Activated CD4-positive, alpha-beta memory T cell treated with anti-CD3 and anti-CD28 coated beads, Interleukin-2, amount 10 ng/mL, durations not matched to agents 7 days and 5 days (primary cell): ENCODE measurements at regions of chr6 and their contacts with region 1.

Region 1: GRCh38 chr6:35297601-35298481 is at the start of gene DEF6:
- DNase-seq: peak; percentile 94
- H3K4me3 Mint-ChIP-seq: peak within 1 kb of the TSS; percentile 79
- H3K27ac Mint-ChIP-seq: peak within 1 kb of the TSS; percentile 95
- H3K4me1 Mint-ChIP-seq: peaks cover 50% of the 10 kb centered on the region
- H3K27me3 Mint-ChIP-seq: no peaks in the 10 kb centered on the region
- total RNA-seq, gene DEF6: 201 to 215 TPM

Region 2: GRCh38 chr6:35148167-35148741 is 149.6 kb before region 1 on chr6:
- CTCF ChIA-PET with region 1: no interaction called
- POLR2A ChIA-PET with region 1: no interaction called
- DNase-seq: peak; percentile 61
- H3K4me3 Mint-ChIP-seq: no peak overlapping the region
- H3K27ac Mint-ChIP-seq: peak overlapping the region; percentile 28
- H3K4me1 Mint-ChIP-seq: peaks cover 35% of the 10 kb centered on the region
- H3K27me3 Mint-ChIP-seq: peaks cover 3% of the 10 kb centered on the region

Region 3: DNA sequence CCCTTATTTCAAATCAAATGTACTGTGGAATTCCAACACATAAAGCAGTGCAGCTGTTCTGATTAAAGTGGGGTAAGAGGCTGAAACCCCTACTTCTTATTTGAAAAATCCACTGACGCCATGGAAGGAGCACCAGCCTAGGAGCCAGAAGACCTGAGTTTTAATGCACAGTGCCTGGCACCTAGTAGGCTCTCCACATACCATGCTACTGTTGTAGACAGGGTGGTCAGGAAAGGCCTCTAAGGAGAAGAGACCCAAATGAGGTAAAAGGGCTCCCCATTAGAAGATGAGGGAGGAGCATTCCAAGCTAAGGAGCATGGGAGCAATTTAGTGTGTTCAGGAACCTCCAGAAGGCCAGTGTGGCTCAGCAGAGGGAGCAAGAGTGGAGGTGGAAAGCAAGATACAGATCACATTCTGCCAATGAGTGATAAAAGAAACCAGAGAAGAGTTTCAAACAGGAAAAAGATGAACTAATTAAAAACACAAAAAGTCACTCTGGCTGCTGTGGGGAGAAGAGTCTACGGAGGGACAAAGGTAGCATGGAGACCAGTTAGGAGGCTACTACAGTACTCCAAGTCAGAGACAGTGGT is 50.1 kb before region 1 on chr6:
- CTCF ChIA-PET with region 1: no interaction called
- POLR2A ChIA-PET with region 1: no interaction called
- DNase-seq: no peak
- H3K4me3 Mint-ChIP-seq: peak overlapping the region; percentile 9
- H3K27ac Mint-ChIP-seq: no peak overlapping the region
- H3K4me1 Mint-ChIP-seq: peaks cover 25% of the 10 kb centered on the region
- H3K27me3 Mint-ChIP-seq: no peaks in the 10 kb centered on the region

Region 4: GRCh38 chr6:35311390-35312075 is 13.7 kb after region 1 on chr6:
- CTCF ChIA-PET with region 1: interaction called, 14 read pairs
- POLR2A ChIA-PET with region 1: interaction called, 190 read pairs
- DNase-seq: peak; percentile 78
- H3K4me3 Mint-ChIP-seq: peak overlapping the region; percentile 59
- H3K27ac Mint-ChIP-seq: peak overlapping the region; percentile 98
- H3K4me1 Mint-ChIP-seq: peaks cover 85% of the 10 kb centered on the region
- H3K27me3 Mint-ChIP-seq: no peaks in the 10 kb centered on the region

Region 5: DNA sequence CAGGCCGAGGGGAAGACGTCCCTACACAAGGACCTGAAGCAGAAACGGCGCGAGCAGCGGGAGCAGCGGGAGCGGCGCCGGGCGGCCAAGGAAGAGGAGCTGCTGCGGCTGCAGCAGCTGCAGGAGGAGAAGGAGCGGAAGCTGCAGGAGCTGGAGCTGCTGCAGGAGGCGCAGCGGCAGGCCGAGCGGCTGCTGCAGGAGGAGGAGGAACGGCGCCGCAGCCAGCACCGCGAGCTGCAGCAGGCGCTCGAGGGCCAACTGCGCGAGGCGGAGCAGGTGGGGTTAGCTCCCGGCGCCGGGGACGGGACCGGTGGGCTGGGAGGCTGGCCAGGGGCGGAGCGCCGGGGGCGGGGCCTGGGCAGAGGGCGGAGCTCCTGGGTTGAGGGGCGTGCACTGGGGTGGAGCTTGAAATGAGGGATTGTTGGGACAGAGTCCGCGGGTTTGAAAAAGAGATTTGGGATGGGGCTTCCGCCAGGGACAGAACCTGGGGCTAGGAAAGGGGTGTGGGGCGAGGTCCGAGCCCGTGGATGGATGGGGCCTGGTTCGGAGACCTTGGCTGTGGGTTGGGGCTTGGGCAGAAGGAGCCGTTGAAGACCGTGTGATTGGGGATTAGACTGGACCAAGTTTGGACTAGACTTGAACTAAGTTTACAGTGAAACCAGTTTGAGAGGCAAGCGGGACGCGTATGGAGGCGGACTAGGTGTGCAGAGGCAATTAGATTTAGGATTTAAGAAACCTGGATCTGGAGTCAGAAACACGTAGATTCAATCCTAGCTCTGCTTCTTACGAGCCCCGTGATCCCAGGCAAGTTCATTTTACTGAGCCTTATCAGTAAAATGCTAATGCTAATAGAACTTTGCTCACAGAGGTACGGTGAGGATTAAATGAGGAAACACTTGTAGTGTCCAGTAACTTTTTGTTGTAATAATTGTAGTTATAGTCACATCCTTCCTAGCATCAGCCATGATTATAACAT is 20.6 kb after region 1 on chr6:
- CTCF ChIA-PET with region 1: interaction called, 172 read pairs
- POLR2A ChIA-PET with region 1: interaction called, 190 read pairs
- DNase-seq: no peak
- H3K4me3 Mint-ChIP-seq: no peak overlapping the region
- H3K27ac Mint-ChIP-seq: no peak overlapping the region
- H3K4me1 Mint-ChIP-seq: peaks cover 25% of the 10 kb centered on the region
- H3K27me3 Mint-ChIP-seq: no peaks in the 10 kb centered on the region

Region 6: GRCh38 chr6:35327349-35328027 is 29.6 kb after region 1 on chr6:
- CTCF ChIA-PET with region 1: interaction called, 172 read pairs
- POLR2A ChIA-PET with region 1: interaction called, 67 read pairs
- DNase-seq: peak; percentile 81
- H3K4me3 Mint-ChIP-seq: no peak overlapping the region
- H3K27ac Mint-ChIP-seq: peak overlapping the region; percentile 44
- H3K4me1 Mint-ChIP-seq: peaks cover 24% of the 10 kb centered on the region
- H3K27me3 Mint-ChIP-seq: no peaks in the 10 kb centered on the region

Region 7: GRCh38 chr6:35342258-35343091 is 44.6 kb after region 1 on chr6 and contains the start of gene PPARD:
- CTCF ChIA-PET with region 1: interaction called, 32 read pairs
- POLR2A ChIA-PET with region 1: interaction called, 29 read pairs
- DNase-seq: peak; percentile 98
- H3K4me3 Mint-ChIP-seq: peak within 1 kb of the TSS; percentile 96
- H3K27ac Mint-ChIP-seq: peak within 1 kb of the TSS; percentile 79
- H3K4me1 Mint-ChIP-seq: peaks cover 45% of the 10 kb centered on the region
- H3K27me3 Mint-ChIP-seq: peaks cover 7% of the 10 kb centered on the region
- total RNA-seq, gene PPARD: 23.1 to 23.4 TPM

Region 8: DNA sequence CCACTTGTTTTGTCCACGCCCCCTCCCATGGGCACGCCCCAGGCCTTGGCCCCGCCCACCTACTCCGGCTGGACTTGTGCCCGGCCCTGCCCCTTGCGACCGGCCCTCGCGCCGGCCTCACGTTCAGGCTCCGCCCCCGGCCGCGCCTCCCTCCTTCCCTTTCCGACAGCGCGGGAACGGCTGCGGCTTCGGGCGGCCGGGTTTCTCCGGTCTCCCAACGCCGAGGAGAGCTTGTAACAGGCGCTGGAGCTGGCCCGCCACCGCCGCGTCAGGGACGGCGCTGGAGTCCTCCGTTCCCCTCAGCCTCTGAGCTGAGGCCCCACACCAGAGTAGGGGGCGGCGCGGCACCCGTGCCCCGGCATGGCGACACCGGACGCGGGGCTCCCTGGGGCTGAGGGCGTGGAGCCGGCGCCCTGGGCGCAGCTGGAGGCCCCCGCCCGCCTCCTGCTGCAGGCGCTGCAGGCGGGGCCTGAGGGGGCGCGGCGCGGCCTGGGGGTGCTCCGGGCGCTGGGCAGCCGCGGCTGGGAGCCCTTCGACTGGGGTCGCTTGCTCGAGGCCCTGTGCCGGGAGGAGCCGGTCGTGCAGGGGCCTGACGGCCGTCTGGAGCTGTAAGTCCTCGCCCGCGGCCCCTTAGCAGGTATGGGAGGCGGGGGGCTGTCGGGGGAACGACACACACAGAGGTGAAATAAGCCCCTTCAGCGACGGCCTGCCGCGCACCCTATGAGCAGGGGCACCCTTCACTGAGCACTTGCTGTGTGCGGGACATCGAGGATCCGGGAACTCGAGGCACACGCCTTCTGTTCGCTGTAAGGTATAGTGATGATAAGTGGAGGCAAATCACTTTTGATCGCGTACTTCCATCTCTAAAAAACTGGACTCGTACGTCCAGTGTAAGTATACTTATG is 154.6 kb after region 1 on chr6 and contains the start of gene FANCE:
- CTCF ChIA-PET with region 1: interaction called, 116 read pairs
- POLR2A ChIA-PET with region 1: interaction called, 22 read pairs
- DNase-seq: peak; percentile 95
- H3K4me3 Mint-ChIP-seq: peak within 1 kb of the TSS; percentile 82
- H3K27ac Mint-ChIP-seq: peak within 1 kb of the TSS; percentile 42
- H3K4me1 Mint-ChIP-seq: peaks cover 38% of the 10 kb centered on the region
- H3K27me3 Mint-ChIP-seq: peaks cover 5% of the 10 kb centered on the region
- total RNA-seq, gene FANCE: 10.3 to 10.4 TPM